Sciatic nerve (tissue), 2 donors: ENCODE measurements at regions of chr3 and their contacts with region 1.

Region 1: DNA sequence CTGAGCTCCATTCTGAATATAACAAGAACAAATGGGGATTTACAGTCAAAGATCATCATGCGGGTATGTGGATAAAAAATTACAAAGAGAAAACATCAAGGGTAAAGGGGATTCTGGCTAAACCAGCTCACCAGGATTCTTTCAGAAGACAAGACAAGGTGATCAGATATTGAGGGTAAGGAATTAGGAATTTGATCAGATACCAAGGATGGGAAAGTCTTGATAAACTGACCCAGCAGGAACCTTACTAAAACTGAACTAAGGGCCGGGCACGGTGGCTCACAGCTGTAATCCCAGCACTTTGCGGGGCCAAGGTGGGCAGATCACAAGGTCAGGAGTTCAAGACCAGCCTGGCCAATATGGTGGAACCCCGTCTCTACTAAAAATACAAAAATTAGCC is 513.2 kb upstream of the CCDC54 start:
- DNase-seq: no peak
- ATAC-seq: no peak

Region 2: DNA sequence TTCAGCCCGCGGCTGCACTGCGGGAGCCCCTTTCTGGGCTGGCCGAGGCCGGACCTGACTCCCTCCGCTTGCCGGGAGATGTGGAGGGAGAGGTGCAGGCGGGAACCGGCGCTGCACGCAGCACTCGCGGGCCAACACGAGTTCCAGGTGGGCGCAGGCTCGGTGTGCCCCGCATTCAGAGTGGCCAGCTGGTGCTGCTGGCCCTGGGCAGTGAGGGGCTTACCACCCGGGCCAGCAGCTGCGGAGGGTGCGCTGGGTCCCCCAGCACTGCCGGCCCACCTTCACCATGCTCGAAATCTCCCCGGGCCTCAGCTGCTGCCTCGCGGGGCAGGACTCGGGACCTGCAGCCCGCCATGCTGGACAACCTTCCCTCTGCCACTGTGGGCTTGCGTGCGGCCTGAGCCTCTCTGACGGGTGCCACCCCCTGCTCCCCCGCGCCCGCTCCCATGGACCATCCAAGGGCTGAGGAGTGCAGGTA is 220.3 kb before region 1 on chr3:
- intact Hi-C with region 1: no loop called
- DNase-seq: no peak
- ATAC-seq: no peak

Region 3: DNA sequence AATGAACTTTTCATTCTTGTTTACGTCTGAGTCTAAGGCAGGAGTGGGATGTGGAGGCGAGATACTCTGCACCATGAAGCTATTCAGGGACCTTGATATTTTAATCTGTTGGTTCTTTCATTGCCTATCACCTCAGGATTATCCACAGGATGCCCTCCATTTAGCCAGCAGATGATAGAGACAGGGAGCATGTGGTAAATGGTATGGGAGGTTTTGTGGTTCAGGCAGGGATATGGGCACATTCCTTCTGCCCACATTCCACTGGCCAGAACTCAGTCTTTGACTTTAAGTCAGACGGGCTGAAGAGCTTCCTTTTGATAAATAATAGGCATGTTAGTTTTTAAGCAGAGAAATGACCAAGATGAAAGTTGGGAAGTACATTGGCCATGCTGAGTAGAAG is 34.8 kb before region 1 on chr3:
- intact Hi-C with region 1: loop called (anchors 2 kb)
- DNase-seq: no peak
- ATAC-seq: no peak

Region 4: DNA sequence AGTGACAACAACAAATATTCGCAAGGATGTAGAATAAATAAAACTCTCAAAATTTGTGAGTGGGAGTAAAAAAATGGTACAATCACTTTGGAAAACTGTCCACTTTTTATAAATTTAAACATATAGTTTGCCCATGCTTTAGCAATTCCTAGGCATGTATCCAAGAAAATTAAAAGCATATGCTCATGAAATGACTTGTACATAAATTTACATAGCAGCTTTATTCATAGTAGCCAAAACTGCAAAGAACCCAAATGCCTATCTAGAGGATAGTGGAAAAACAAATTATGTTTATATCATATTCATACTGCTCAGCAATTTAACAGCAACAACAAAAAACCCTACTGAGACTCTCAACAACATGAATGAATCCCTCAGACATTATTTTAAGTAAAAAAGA is 149.6 kb after region 1 on chr3:
- intact Hi-C with region 1: no loop called
- DNase-seq: no peak
- ATAC-seq: no peak